ENCODE measurements at regions of chr11 and their contacts with region 1.

Region 1: GRCh38 chr11:67382276-67383136 is 9.1 kb upstream of the CLCF1 start:
- DNase-seq: peak; percentile 76 to 81 (median 81)
- ATAC-seq: peak; percentile 92 to 96 (median 93)
- H3K4me3 ChIP-seq: no peak overlapping the region
- H3K27ac ChIP-seq: no peak overlapping the region
- H3K4me1 ChIP-seq: no peaks in the 10 kb centered on the region
- H3K27me3 ChIP-seq: no peaks in the 10 kb centered on the region
- CTCF ChIP-seq: peak; percentile 92 to 98 (median 95)
- POLR2A ChIP-seq: no peak

Region 2: DNA sequence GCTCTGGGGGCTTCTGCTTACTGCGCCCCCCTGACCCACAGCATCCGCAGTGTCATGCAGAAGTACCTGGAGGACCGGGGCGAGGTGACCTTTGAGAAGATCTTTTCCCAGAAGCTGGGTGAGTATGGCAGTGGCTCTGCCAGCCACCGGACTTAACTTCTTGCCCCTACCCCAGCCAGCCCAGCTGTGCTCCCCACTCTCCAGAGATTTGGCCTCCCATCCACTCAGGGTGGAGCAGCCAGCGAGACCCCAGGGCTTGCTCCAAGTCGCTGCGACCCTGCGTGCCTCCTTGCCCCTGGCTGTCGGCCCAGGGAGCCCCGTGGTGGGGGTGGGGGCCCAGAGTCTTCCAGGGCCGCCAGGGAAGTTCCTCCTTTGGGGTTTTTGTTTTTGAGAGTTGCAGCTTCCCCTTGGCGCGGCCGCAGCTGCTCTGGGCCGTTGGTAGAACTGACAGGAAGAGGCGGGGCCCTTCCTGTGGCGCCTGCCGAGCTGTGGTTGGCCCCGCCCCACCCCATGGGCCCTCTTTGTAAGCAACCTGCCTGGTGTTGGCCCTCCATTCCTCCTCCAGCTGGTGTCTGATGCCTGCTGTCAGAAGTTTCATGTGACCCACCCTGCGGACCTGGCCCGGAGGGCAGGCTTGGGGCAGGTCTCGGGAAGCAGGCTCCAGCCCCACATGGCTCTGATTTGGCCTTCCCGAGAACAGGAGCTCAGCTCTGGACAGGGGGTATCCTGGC is 105.1 kb before region 1 on chr11:
- intact Hi-C with region 1: loop called in 1 of 2 experiments (anchors 10 kb)
- DNase-seq: peak; percentile 83 to 90 (median 88)
- ATAC-seq: peak; percentile 61 to 72 (median 66)
- H3K4me3 ChIP-seq: no peak overlapping the region
- H3K27ac ChIP-seq: peak overlapping the region; percentile 58 to 81 (median 62)
- H3K4me1 ChIP-seq: peaks cover 0 to 33% (median 0%) of the 10 kb centered on the region in 4 donors
- H3K27me3 ChIP-seq: no peaks in the 10 kb centered on the region
- CTCF ChIP-seq: no peak
- POLR2A ChIP-seq: no peak

Region 3: GRCh38 chr11:67345920-67346799 is 36.3 kb before region 1 on chr11:
- intact Hi-C with region 1: loop called in 1 of 2 experiments (anchors 5 kb)
- DNase-seq: no peak
- ATAC-seq: peak; percentile 22 to 73 (median 42)
- H3K4me3 ChIP-seq: no peak overlapping the region
- H3K27ac ChIP-seq: no peak overlapping the region
- H3K4me1 ChIP-seq: peaks cover 0 to 4% (median 2%) of the 10 kb centered on the region in 4 donors
- H3K27me3 ChIP-seq: no peaks in the 10 kb centered on the region
- CTCF ChIP-seq: peak; percentile 44 to 57 (median 52)
- POLR2A ChIP-seq: no peak

Measured in right lobe of liver (tissue), 6 donors.